ENCODE measurements at regions of chr3 and their contacts with region 1.

Region 1: DNA sequence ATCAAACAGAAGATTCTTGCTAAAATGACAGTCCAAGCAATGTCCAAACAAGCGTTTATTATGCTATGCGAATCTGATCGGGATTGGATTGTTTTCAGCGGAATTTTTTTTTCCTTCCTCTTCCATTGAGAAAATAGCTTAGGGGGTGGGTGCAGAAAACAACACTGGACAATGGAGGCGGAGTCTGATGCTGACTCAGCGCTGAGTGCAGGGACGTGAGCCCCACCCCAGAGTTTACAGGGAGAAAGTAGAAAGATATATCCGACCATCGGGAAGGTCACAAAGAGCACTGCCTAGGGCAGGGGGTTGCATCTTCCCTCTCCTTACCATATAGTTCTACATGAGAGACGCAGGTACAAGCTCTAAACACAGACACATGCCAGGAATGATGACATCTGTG is 117.0 kb downstream of the FOXP1 start:
- DNase-seq: no peak
- H3K4me3 ChIP-seq: no peak overlapping the region
- H3K27ac ChIP-seq: no peak overlapping the region
- H3K4me1 ChIP-seq: peaks cover 6 to 24% (median 9%) of the 10 kb centered on the region in 4 experiments; a peak in 6 of 7 replicates
- H3K27me3 ChIP-seq: no peaks in the 10 kb centered on the region
- CTCF ChIP-seq: no peak
- EP300 ChIP-seq: no peak
- POLR2A ChIP-seq: no peak
- RAD21 ChIP-seq: no peak

Region 2: GRCh38 chr3:71380096-71380495 is 86.4 kb before region 1 on chr3:
- CTCF ChIA-PET with region 1: no interaction called
- POLR2A ChIA-PET with region 1: no interaction called
- DNase-seq: no peak
- H3K4me3 ChIP-seq: no peak overlapping the region
- H3K27ac ChIP-seq: no peak overlapping the region
- H3K4me1 ChIP-seq: peaks cover 3 to 7% (median 4%) of the 10 kb centered on the region in 4 experiments; a peak in 4 of 7 replicates
- H3K27me3 ChIP-seq: no peaks in the 10 kb centered on the region
- CTCF ChIP-seq: peak in 2 of 3 experiments; percentile 34 to 43; a peak in 3 of 4 replicates
- EP300 ChIP-seq: no peak
- POLR2A ChIP-seq: no peak
- RAD21 ChIP-seq: peak in 1 of 2 experiments; percentile 45; a peak in 2 of 4 replicates

Region 3: GRCh38 chr3:71441217-71441924 is 25.1 kb before region 1 on chr3:
- CTCF ChIA-PET with region 1: no interaction called
- POLR2A ChIA-PET with region 1: no interaction called
- DNase-seq: no peak
- H3K4me3 ChIP-seq: no peak overlapping the region
- H3K27ac ChIP-seq: no peak overlapping the region
- H3K4me1 ChIP-seq: 0 out of 7 replicates have a peak, but pooled peaks cover 0 to 2% (median 0%) of the 10 kb centered on the region in 4 experiments
- H3K27me3 ChIP-seq: no peaks in the 10 kb centered on the region
- CTCF ChIP-seq: no peak
- EP300 ChIP-seq: no peak
- POLR2A ChIP-seq: no peak
- RAD21 ChIP-seq: no peak

Region 4: GRCh38 chr3:71476950-71477349 is 10.5 kb after region 1 on chr3:
- CTCF ChIA-PET with region 1: interaction called, 10 read pairs
- POLR2A ChIA-PET with region 1: no interaction called
- DNase-seq: no peak
- H3K4me3 ChIP-seq: no peak overlapping the region
- H3K27ac ChIP-seq: no peak overlapping the region
- H3K4me1 ChIP-seq: peaks cover 0 to 4% (median 0%) of the 10 kb centered on the region in 4 experiments; a peak in 1 of 7 replicates
- H3K27me3 ChIP-seq: no peaks in the 10 kb centered on the region
- CTCF ChIP-seq: peak in 2 of 3 experiments; percentile 17 to 47; a peak in 2 of 4 replicates
- EP300 ChIP-seq: no peak
- POLR2A ChIP-seq: no peak
- RAD21 ChIP-seq: peak; percentile 18 to 51; a peak in 3 of 4 replicates

Region 5: DNA sequence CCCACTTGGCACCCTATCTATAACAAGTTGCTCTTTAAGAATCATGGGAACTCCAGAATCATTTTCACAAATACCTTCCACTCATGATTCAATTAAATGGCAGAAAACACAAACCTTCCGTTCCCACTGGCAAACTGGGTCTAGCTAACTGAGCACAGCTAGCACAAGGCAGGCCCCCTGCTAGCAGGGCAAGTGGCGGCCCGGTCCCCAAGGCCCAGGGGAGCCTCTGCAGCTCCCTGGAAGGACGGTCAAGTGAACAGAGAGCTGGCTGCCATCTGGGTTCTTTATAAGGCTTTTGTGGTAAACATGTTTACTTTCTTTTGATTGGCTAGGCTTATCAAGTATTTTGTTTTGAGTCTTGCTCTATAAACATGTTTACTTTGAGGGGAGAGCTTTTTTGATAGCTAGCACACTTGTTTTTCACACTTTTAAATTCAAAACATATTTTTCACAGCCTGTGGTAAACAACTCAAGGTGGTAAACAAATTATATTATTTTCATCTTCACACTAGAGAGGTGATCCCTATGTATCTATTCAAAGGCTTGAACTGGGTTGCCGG is 35.7 kb after region 1 on chr3:
- CTCF ChIA-PET with region 1: no interaction called
- POLR2A ChIA-PET with region 1: no interaction called
- DNase-seq: no peak
- H3K4me3 ChIP-seq: no peak overlapping the region
- H3K27ac ChIP-seq: no peak overlapping the region
- H3K4me1 ChIP-seq: peaks cover 7 to 20% (median 17%) of the 10 kb centered on the region in 4 experiments; a peak in 6 of 7 replicates
- H3K27me3 ChIP-seq: no peaks in the 10 kb centered on the region
- CTCF ChIP-seq: no peak
- EP300 ChIP-seq: no peak
- POLR2A ChIP-seq: no peak
- RAD21 ChIP-seq: no peak

Measured in H1 (cell line).